Endothelial cell of umbilical vein (primary cell): ENCODE measurements at regions of chr5 and their contacts with region 1.

Region 1: DNA sequence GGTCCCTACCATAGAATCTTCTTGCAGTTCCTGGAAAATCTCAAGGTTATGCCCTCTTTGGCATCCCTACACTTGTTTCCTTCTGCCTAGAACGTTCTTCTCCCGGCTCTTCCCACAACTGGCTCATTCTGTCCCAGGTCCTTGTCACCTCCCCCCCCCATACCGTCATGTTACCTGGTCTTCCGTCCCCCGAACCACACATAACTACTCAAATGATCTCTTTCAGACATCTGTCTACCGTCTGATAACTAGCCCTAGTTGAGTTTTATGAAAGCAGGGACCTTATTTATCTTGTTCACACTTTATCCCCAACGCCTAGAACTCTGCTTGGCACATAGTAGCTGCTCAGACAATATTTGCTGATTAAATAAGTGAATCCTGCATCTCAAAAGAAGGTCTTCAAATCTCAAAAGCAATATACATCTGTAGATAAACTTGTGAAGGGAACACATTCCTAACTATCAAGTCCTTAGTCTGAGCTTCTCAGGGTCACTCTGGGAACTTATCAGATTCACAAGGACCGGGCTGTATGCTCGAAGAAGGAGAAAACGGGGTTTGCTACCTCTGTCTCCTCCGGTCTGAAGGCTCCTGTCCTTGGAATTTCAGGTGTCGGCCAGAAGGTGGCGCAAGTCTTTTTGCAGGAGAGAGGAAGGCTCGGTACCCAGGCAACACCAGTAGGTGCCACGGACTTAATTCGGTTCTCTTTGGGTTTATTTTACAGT is 30.0 kb downstream of the LCP2 start:
- DNase-seq: peak; percentile 75
- H3K4me3 ChIP-seq: no peak overlapping the region
- H3K27ac ChIP-seq: no peak overlapping the region
- H3K4me1 ChIP-seq: no peaks in the 10 kb centered on the region
- H3K27me3 ChIP-seq: peaks cover 17 to 35% of the 10 kb centered on the region in 2 experiments
- CTCF ChIP-seq: peak; percentile 81 to 83
- POLR2A ChIP-seq: no peak

Region 2: DNA sequence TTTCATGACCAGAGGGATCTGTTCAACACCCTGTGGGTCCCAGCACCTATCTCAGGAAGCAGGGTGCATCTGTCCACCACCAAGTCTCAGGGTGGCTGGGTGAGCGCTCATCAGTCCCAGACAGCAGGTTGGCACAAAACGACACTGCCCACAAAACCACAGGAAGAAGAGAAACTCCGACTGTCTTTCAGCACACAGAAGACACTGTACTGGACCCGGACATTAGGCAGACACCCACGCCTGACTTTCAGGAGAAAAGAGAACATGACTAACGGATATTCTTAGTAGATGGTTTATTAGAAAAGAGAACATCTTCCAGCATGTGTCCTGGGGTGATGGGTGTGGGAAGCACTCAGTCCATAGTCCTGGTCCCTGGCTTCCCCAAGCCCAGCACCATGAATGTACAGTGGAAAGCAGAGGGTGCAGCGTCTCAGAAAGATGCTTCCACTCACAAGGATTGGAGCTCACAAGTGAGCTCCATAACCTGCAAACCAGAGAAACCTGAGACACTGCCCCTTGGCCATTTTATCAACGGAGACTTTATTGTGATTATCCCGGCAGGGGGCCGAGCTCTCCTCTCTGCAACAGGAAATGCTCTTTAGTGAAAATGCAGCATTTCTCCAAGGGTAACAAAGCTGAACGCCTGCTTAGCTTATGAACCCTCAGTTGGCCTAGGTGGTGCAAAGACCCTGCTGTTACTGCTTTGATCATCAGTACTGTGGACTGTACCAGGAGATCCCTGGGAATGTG is 65.7 kb after region 1 on chr5:
- CTCF ChIA-PET with region 1: interaction called, 8 read pairs
- POLR2A ChIA-PET with region 1: no interaction called
- dilution Hi-C with region 1: no loop called
- intact Hi-C with region 1: loop called (anchors 2 kb)
- DNase-seq: no peak
- H3K4me3 ChIP-seq: no peak overlapping the region
- H3K27ac ChIP-seq: no peak overlapping the region
- H3K4me1 ChIP-seq: peaks cover 14% of the 10 kb centered on the region
- H3K27me3 ChIP-seq: peaks cover 0 to 2% of the 10 kb centered on the region in 2 experiments
- CTCF ChIP-seq: no peak
- POLR2A ChIP-seq: no peak

Region 3: DNA sequence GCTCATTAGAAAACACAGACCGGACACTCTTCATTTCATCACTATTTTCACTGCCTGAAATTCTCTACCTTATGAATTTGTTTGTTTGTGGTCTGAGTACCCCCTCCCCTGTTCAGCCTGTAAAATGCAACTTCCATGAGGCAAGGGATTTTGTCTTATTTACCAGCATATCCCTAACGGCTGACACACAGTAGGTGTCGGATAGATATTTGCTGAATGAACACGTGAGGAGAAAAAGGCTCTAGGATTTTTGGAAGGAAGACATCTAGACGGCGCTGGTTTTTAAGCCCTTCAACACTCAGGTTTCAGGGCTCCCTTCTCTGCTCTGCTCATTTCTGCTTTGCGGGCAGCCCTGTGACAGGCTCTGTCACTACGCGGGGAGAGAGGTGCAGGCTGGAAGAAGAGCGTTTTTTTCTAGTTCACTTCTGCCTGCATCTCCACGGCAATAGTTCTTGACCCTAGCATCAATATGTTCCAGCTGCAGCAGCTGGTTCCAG is 80.6 kb after region 1 on chr5:
- CTCF ChIA-PET with region 1: interaction called, 27 read pairs
- POLR2A ChIA-PET with region 1: no interaction called
- dilution Hi-C with region 1: no loop called
- intact Hi-C with region 1: loop called (anchors 1 kb)
- DNase-seq: no peak
- H3K4me3 ChIP-seq: no peak overlapping the region
- H3K27ac ChIP-seq: no peak overlapping the region
- H3K4me1 ChIP-seq: no peaks in the 10 kb centered on the region
- H3K27me3 ChIP-seq: peaks cover 6 to 16% of the 10 kb centered on the region in 2 experiments
- CTCF ChIP-seq: no peak
- POLR2A ChIP-seq: no peak

Region 4: GRCh38 chr5:170420780-170421412 is 153.3 kb after region 1 on chr5:
- CTCF ChIA-PET with region 1: interaction called, 27 read pairs
- POLR2A ChIA-PET with region 1: no interaction called
- dilution Hi-C with region 1: no loop called
- intact Hi-C with region 1: loop called (anchors 1 kb)
- DNase-seq: peak; percentile 68
- H3K4me3 ChIP-seq: no peak overlapping the region
- H3K27ac ChIP-seq: no peak overlapping the region
- H3K4me1 ChIP-seq: no peaks in the 10 kb centered on the region
- H3K27me3 ChIP-seq: peaks cover 3 to 5% of the 10 kb centered on the region in 2 experiments
- CTCF ChIP-seq: peak; percentile 69 to 70
- POLR2A ChIP-seq: no peak